ENCODE measurements at regions of chr7 and their contacts with region 1.

Region 1: GRCh38 chr7:43925984-43926797 is at the start of gene UBE2D4:
- DNase-seq: peak; percentile 91
- H3K4me3 Mint-ChIP-seq: peak within 1 kb of the TSS; percentile 90
- H3K27ac Mint-ChIP-seq: peak within 1 kb of the TSS; percentile 88
- H3K4me1 Mint-ChIP-seq: peaks cover 33% of the 10 kb centered on the region
- H3K27me3 Mint-ChIP-seq: no peaks in the 10 kb centered on the region
- total RNA-seq, gene UBE2D4: 11.4 to 12.8 TPM

Region 2: DNA sequence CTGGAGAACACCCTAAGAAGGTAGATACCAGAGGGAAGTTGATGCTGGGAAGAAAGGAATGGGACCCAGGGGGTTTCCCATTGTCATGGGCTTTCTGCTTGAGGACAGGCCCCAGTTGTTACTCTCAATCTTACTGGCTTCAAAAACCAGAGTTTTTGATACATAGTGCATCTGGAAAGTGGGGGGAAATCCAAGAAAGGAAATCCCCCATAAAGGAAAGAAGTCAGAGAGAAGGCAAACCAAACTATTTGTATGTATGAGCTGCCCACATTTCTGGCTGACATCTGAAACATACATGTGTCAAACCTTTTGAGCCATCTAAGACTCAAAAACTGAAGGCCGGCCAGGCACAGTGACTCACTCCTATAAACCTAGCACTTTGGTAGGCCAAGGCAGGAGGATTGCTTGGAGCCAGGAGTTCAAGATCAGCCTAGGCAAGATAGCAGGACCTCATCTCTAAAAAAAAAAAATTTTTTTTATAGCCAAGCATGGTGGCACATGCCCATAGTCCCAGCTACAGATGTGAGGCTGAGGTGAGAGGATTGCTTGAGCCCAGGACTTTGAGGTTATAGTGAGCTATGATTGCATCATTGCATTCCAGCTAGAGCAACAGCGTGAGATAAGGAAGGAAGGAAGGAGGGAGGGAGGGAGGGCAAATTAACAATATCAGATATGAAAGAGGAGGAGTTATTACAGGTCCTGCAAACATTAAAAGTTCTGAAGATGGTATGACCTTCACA is 190.2 kb before region 1 on chr7:
- CTCF ChIA-PET with region 1: no interaction called
- intact Hi-C with region 1: loop called (anchors 1 kb)
- DNase-seq: peak; percentile 86
- H3K4me3 Mint-ChIP-seq: no peak overlapping the region
- H3K27ac Mint-ChIP-seq: peak overlapping the region; percentile 75
- H3K4me1 Mint-ChIP-seq: peaks cover 22% of the 10 kb centered on the region
- H3K27me3 Mint-ChIP-seq: peaks cover 7% of the 10 kb centered on the region

Region 3: DNA sequence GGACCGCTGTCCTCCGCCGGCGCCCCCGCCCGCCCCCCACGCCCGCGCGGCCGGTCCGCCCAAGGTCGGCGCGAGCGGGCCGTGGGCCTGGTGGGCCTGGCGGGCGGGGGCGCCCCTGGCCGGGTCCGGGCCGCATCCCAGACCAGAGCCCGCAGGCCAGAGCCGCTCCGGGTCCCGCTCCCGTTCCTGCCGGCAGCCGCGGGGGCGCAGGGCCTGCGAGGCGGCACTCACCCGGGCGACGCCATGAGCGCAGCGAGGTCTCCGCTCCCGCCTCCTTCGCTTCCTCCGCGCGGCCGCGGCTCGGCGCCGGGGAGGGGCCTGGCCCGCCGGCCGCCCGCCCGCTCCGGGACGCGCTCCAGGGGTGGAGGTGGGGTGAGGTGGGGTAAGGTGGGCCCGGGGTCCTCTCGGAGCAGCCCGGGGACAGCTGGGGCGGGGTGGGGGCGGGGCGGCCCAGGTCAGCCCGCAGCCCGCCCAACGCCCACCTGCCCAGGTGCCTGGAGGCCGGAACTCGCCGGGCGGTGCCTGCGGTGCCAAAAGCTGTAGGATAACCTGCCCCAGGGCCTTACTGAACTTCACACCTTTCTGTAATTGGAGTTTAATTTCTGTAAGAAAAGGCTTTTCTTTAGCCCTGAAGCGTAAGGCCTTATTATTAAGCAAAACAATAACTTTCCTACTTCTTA is 19.7 kb before region 1 on chr7 and contains the start of gene URGCP:
- CTCF ChIA-PET with region 1: no interaction called
- intact Hi-C with region 1: loop called (anchors 1 kb)
- DNase-seq: peak; percentile 54
- H3K4me3 Mint-ChIP-seq: peak within 1 kb of the TSS; percentile 92
- H3K27ac Mint-ChIP-seq: peak within 1 kb of the TSS; percentile 91
- H3K4me1 Mint-ChIP-seq: peaks cover 35% of the 10 kb centered on the region
- H3K27me3 Mint-ChIP-seq: no peaks in the 10 kb centered on the region
- total RNA-seq, gene URGCP: 21.5 to 23.9 TPM

Region 4: GRCh38 chr7:44123190-44124003 is 197.2 kb after region 1 on chr7 and contains the start of gene POLD2:
- CTCF ChIA-PET with region 1: no interaction called
- intact Hi-C with region 1: loop called (anchors 1 kb)
- DNase-seq: peak; percentile 98
- H3K4me3 Mint-ChIP-seq: peak within 1 kb of the TSS; percentile 88
- H3K27ac Mint-ChIP-seq: peak within 1 kb of the TSS; percentile 74
- H3K4me1 Mint-ChIP-seq: peaks cover 43% of the 10 kb centered on the region
- H3K27me3 Mint-ChIP-seq: no peaks in the 10 kb centered on the region
- total RNA-seq, gene POLD2: 261 to 270 TPM

Measured in activated naive CD4-positive, alpha-beta T cell treated with anti-CD3 and anti-CD28 coated beads for 36 hours (primary cell).